ENCODE measurements at regions of chr12 and their contacts with region 1.

Region 1: GRCh38 chr12:76539727-76540126 is 19.8 kb downstream of the OSBPL8 start:
- DNase-seq: no peak
- ATAC-seq: no peak
- H3K4me3 Mint-ChIP-seq: no peak overlapping the region
- H3K27ac Mint-ChIP-seq: no peak overlapping the region
- H3K4me1 Mint-ChIP-seq: peaks cover 23% of the 10 kb centered on the region
- H3K27me3 Mint-ChIP-seq: no peaks in the 10 kb centered on the region
- CTCF ChIP-seq: no peak

Region 2: GRCh38 chr12:76426160-76426559 is 113.6 kb before region 1 on chr12:
- CTCF ChIA-PET with region 1: no interaction called
- POLR2A ChIA-PET with region 1: no interaction called
- intact Hi-C with region 1: no loop called
- DNase-seq: no peak
- ATAC-seq: no peak
- H3K4me3 Mint-ChIP-seq: no peak overlapping the region
- H3K27ac Mint-ChIP-seq: no peak overlapping the region
- H3K4me1 Mint-ChIP-seq: peaks cover 17% of the 10 kb centered on the region
- H3K27me3 Mint-ChIP-seq: no peaks in the 10 kb centered on the region
- CTCF ChIP-seq: no peak

Region 3: DNA sequence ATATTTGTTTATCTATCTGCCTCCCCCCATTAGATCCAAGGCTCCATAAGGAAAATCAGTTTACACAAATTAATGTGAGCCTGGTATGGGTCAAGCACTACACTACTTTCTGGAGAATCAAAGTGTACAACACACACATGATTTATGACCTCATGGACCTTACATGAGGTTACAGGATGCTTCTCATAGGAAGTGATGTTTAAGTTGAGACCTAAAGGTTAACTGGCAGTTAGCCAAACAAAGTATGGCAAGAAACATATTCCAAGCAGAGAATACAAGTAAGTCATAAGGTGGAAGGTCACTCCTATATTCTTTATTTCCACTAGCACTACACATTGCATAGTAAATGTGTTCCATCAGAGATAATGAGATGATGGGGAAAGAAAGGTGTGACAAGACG is 19.4 kb before region 1 on chr12:
- CTCF ChIA-PET with region 1: no interaction called
- POLR2A ChIA-PET with region 1: no interaction called
- intact Hi-C with region 1: loop called (anchors 2 kb)
- DNase-seq: no peak
- ATAC-seq: no peak
- H3K4me3 Mint-ChIP-seq: no peak overlapping the region
- H3K27ac Mint-ChIP-seq: no peak overlapping the region
- H3K4me1 Mint-ChIP-seq: peaks cover 42% of the 10 kb centered on the region
- H3K27me3 Mint-ChIP-seq: no peaks in the 10 kb centered on the region
- CTCF ChIP-seq: no peak

Region 4: GRCh38 chr12:76551482-76551888 is 11.8 kb after region 1 on chr12:
- CTCF ChIA-PET with region 1: no interaction called
- POLR2A ChIA-PET with region 1: no interaction called
- intact Hi-C with region 1: loop called (anchors 1 kb)
- DNase-seq: no peak
- ATAC-seq: peak; percentile 61
- H3K4me3 Mint-ChIP-seq: peak overlapping the region; percentile 37
- H3K27ac Mint-ChIP-seq: peak overlapping the region; percentile 38
- H3K4me1 Mint-ChIP-seq: peaks cover 92% of the 10 kb centered on the region
- H3K27me3 Mint-ChIP-seq: no peaks in the 10 kb centered on the region
- CTCF ChIP-seq: no peak

Region 5: DNA sequence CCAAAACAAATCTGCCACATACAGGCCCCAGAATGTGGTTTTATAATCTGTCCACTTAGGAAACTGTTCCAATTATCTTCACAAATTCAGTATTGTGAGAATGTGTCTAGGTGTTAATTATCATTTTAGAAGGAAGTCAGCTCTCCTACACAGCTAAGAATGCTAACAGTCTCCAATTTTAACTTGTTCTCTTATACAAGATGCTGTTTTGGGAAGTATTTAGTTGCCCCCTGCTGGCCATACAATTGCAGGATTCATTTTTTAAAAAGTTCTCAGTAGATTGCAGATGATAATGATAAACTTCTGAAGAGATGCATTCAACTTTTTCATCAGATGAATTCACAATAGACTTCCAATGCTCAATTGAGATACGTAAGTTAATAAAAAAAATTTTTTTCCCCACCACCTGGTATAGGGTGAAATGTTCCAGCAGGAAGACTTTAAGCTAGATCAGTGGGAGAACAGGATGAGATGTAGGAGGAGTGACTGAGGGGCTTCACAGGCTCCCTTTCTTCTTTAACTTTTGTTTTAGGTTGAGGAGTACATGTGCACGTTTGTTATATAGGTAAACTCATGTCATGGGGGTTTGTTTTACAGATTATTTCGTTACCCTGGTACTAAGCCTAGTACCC is 47.2 kb after region 1 on chr12:
- CTCF ChIA-PET with region 1: no interaction called
- POLR2A ChIA-PET with region 1: no interaction called
- intact Hi-C with region 1: no loop called
- DNase-seq: no peak
- ATAC-seq: peak; percentile 58
- H3K4me3 Mint-ChIP-seq: no peak overlapping the region
- H3K27ac Mint-ChIP-seq: no peak overlapping the region
- H3K4me1 Mint-ChIP-seq: peaks cover 9% of the 10 kb centered on the region
- H3K27me3 Mint-ChIP-seq: no peaks in the 10 kb centered on the region
- CTCF ChIP-seq: peak; percentile 82

Measured in activated B cell treated with CpG ODN at 0.5 μM for 24 hours (primary cell).